ENCODE measurements at regions of chrX and their contacts with region 1.

Region 1: GRCh38 chrX:136268051-136269048 is 17.1 kb upstream of the MAP7D3 start:
- DNase-seq: peak; percentile 52
- H3K4me3 ChIP-seq: no peak overlapping the region
- H3K27ac ChIP-seq: no peak overlapping the region
- H3K4me1 ChIP-seq: peaks cover 21% of the 10 kb centered on the region
- H3K27me3 ChIP-seq: no peaks in the 10 kb centered on the region
- CTCF ChIP-seq: peak; percentile 54 to 58
- POLR2A ChIP-seq: no peak

Region 2: GRCh38 chrX:136130931-136131833 is 137.2 kb before region 1 on chrX:
- CTCF ChIA-PET with region 1: no interaction called
- POLR2A ChIA-PET with region 1: no interaction called
- dilution Hi-C with region 1: no loop called
- intact Hi-C with region 1: no loop called
- DNase-seq: peak; percentile 7
- H3K4me3 ChIP-seq: no peak overlapping the region
- H3K27ac ChIP-seq: peak overlapping the region; percentile 38
- H3K4me1 ChIP-seq: no peaks in the 10 kb centered on the region
- H3K27me3 ChIP-seq: no peaks in the 10 kb centered on the region
- CTCF ChIP-seq: no peak
- POLR2A ChIP-seq: no peak

Region 3: GRCh38 chrX:136147315-136147901 is 120.9 kb before region 1 on chrX and contains the start of gene FHL1:
- CTCF ChIA-PET with region 1: interaction called, 3 read pairs
- POLR2A ChIA-PET with region 1: no interaction called
- dilution Hi-C with region 1: no loop called
- intact Hi-C with region 1: loop called (anchors 5 kb)
- DNase-seq: peak; percentile 32
- H3K4me3 ChIP-seq: peak within 1 kb of the TSS; percentile 56 to 62 (median 61)
- H3K27ac ChIP-seq: no peak within 1 kb of the TSS
- H3K4me1 ChIP-seq: peaks cover 2% of the 10 kb centered on the region
- H3K27me3 ChIP-seq: peaks cover 0 to 2% of the 10 kb centered on the region in 2 experiments
- CTCF ChIP-seq: no peak
- POLR2A ChIP-seq: no peak
- total RNA-seq, gene FHL1: 59.4 and 73.2 TPM in 2 replicates

Region 4: DNA sequence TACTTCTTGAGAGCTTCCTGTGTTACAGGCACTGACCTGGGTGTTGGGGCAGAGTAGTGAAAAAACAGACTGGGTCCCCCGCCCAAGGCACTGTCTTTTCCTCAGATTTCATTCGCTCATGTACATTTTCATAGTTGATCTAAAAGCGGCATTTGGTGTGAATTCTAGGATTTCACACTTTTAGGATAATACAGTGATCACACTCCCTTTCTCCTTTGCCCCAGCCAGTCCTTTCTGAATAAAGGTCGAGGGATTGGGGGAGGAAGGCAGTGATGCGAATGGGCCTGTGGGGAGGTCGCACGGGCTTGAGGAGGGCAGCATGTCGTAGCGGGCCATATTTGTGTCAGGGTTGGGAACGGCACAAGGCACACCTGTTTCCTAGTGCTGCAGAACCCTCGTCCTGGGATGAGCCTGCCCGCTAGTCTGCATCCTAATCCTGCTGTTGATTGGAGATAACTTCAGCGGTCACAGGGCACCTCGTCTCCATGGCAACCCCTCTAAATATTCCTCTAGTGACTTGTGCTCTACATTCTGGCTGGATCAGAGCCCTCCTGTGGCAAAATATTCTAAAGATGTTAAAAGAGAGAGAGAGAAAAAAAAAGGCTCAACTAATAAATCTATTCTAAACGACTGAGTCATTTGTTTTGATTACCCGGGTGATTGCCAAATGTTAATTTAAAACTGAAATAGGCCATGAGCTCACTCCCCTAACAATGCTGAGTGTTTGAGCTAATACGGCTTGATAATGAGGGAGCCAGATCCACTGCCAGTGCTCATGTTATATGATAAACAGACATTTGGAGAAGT is 99.2 kb before region 1 on chrX:
- CTCF ChIA-PET with region 1: interaction called, 15 read pairs
- POLR2A ChIA-PET with region 1: no interaction called
- dilution Hi-C with region 1: no loop called
- intact Hi-C with region 1: loop called (anchors 1 kb)
- DNase-seq: peak; percentile 92
- H3K4me3 ChIP-seq: no peak overlapping the region
- H3K27ac ChIP-seq: peak overlapping the region; percentile 64
- H3K4me1 ChIP-seq: peaks cover 19% of the 10 kb centered on the region
- H3K27me3 ChIP-seq: no peaks in the 10 kb centered on the region
- CTCF ChIP-seq: no peak
- POLR2A ChIP-seq: no peak

Region 5: GRCh38 chrX:136220535-136220934 is 47.8 kb before region 1 on chrX:
- CTCF ChIA-PET with region 1: interaction called, 5 read pairs
- POLR2A ChIA-PET with region 1: no interaction called
- dilution Hi-C with region 1: no loop called
- intact Hi-C with region 1: loop called (anchors 2 kb)
- DNase-seq: no peak
- H3K4me3 ChIP-seq: no peak overlapping the region
- H3K27ac ChIP-seq: peak overlapping the region; percentile 64
- H3K4me1 ChIP-seq: peaks cover 14% of the 10 kb centered on the region
- H3K27me3 ChIP-seq: no peaks in the 10 kb centered on the region
- CTCF ChIP-seq: no peak
- POLR2A ChIP-seq: no peak

Region 6: GRCh38 chrX:136347706-136348105 is 79.4 kb after region 1 on chrX:
- CTCF ChIA-PET with region 1: no interaction called
- POLR2A ChIA-PET with region 1: no interaction called
- dilution Hi-C with region 1: no loop called
- intact Hi-C with region 1: no loop called
- DNase-seq: no peak
- H3K4me3 ChIP-seq: no peak overlapping the region
- H3K27ac ChIP-seq: no peak overlapping the region
- H3K4me1 ChIP-seq: no peaks in the 10 kb centered on the region
- H3K27me3 ChIP-seq: no peaks in the 10 kb centered on the region
- CTCF ChIP-seq: no peak
- POLR2A ChIP-seq: no peak

Region 7: DNA sequence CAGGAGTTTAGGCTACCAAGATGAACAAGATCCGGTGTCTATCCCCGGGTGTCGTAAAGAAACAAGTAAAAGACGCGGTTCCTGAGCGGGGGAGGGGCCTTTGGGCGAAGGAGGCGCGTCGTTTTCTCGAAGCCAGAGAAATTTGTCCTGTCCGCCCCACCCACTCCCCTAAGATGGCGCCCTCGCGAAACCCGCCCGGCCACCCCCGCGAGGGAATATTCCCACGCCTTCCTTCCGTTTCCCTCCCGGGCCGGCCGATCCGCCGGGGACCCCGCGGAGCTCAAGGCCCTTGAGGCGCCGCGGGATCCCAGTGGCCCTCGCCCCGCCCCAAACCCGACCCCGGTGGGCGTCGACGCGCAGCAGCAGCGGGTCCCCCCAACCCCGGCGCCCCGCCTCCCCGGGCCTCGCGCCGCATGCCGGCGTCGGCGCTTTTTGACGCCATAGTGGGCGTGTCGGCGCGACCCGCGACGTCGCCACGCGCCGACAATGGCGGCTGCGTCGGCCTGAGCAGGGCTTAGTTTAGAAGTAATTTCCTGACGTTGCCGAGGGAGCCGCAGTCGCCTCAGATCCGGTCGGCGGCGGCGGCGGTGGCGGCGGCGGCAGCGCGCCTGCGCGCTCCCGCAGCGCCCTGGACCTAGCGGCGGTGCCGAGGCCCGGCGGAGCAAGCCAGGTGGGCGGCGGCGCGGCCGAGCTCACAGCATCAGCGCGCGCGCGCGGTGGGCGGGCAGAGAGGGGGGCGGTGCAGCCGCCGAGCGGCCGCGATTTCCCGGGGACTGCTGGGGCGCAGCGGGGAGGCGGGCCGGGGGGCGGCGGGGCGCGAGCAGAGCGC is 228.6 kb after region 1 on chrX and contains the start of gene HTATSF1:
- CTCF ChIA-PET with region 1: no interaction called
- POLR2A ChIA-PET with region 1: no interaction called
- dilution Hi-C with region 1: no loop called
- intact Hi-C with region 1: loop called (anchors 2 kb)
- DNase-seq: peak; percentile 84
- H3K4me3 ChIP-seq: peak within 1 kb of the TSS; percentile 46 to 89 (median 76)
- H3K27ac ChIP-seq: peak within 1 kb of the TSS; percentile 94
- H3K4me1 ChIP-seq: peaks cover 7% of the 10 kb centered on the region
- H3K27me3 ChIP-seq: no peaks in the 10 kb centered on the region
- CTCF ChIP-seq: no peak
- POLR2A ChIP-seq: no peak
- total RNA-seq, gene HTATSF1: 30.4 and 31.1 TPM in 2 replicates